ENCODE measurements at regions of chr21 and their contacts with region 1.

Region 1: GRCh38 chr21:45140346-45140940 is 66.1 kb downstream of the ADARB1 start:
- DNase-seq: peak; percentile 50
- H3K4me3 Mint-ChIP-seq: no peak overlapping the region
- H3K27ac Mint-ChIP-seq: no peak overlapping the region
- H3K4me1 Mint-ChIP-seq: peaks cover 5% of the 10 kb centered on the region
- H3K27me3 Mint-ChIP-seq: no peaks in the 10 kb centered on the region

Region 2: GRCh38 chr21:45309069-45309986 is 168.9 kb after region 1 on chr21:
- intact Hi-C with region 1: loop called (anchors 5 kb)
- DNase-seq: peak; percentile 18
- H3K4me3 Mint-ChIP-seq: no peak overlapping the region
- H3K27ac Mint-ChIP-seq: peak overlapping the region; percentile 74
- H3K4me1 Mint-ChIP-seq: peaks cover 7% of the 10 kb centered on the region
- H3K27me3 Mint-ChIP-seq: peaks cover 9% of the 10 kb centered on the region